ENCODE measurements at regions of chr13 and their contacts with region 1.

Region 1: GRCh38 chr13:79349011-79349410 is 57.0 kb downstream of the RBM26 start:
- DNase-seq: no peak
- H3K4me3 Mint-ChIP-seq: no peak overlapping the region
- H3K27ac Mint-ChIP-seq: no peak overlapping the region
- H3K4me1 Mint-ChIP-seq: peaks cover 47% of the 10 kb centered on the region
- H3K27me3 Mint-ChIP-seq: no peaks in the 10 kb centered on the region

Region 2: DNA sequence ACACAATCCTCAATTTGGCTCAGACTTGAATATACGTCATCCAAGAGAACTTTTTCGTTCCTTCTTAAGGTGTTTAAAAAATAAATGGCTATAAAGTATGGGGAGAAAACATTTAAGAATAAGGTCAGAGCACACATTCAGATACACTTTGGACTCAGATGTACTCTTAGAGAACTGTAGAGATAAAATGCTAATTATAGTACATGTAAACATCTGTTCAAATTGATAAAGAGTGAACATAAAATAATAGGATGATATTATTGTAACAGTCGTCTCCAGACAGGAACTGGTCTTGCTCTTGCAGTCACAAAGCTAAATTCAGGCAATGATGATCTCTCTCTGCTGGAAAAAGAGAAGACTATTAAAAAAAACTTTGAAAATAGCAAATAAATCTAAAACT is 34.4 kb before region 1 on chr13:
- intact Hi-C with region 1: loop called (anchors 5 kb)
- DNase-seq: no peak
- H3K4me3 Mint-ChIP-seq: no peak overlapping the region
- H3K27ac Mint-ChIP-seq: no peak overlapping the region
- H3K4me1 Mint-ChIP-seq: peaks cover 1% of the 10 kb centered on the region
- H3K27me3 Mint-ChIP-seq: no peaks in the 10 kb centered on the region

Region 3: GRCh38 chr13:79328510-79328909 is 20.5 kb before region 1 on chr13:
- intact Hi-C with region 1: no loop called
- DNase-seq: no peak
- H3K4me3 Mint-ChIP-seq: no peak overlapping the region
- H3K27ac Mint-ChIP-seq: no peak overlapping the region
- H3K4me1 Mint-ChIP-seq: peaks cover 6% of the 10 kb centered on the region
- H3K27me3 Mint-ChIP-seq: no peaks in the 10 kb centered on the region

Region 4: GRCh38 chr13:79360095-79360494 is 11.1 kb after region 1 on chr13:
- intact Hi-C with region 1: loop called (anchors 2 kb)
- DNase-seq: no peak
- H3K4me3 Mint-ChIP-seq: no peak overlapping the region
- H3K27ac Mint-ChIP-seq: no peak overlapping the region
- H3K4me1 Mint-ChIP-seq: peaks cover 20% of the 10 kb centered on the region
- H3K27me3 Mint-ChIP-seq: no peaks in the 10 kb centered on the region

Region 5: GRCh38 chr13:79385694-79386093 is 36.7 kb after region 1 on chr13:
- intact Hi-C with region 1: loop called (anchors 5 kb)
- DNase-seq: no peak
- H3K4me3 Mint-ChIP-seq: no peak overlapping the region
- H3K27ac Mint-ChIP-seq: no peak overlapping the region
- H3K4me1 Mint-ChIP-seq: peaks cover 65% of the 10 kb centered on the region
- H3K27me3 Mint-ChIP-seq: no peaks in the 10 kb centered on the region

Region 6: GRCh38 chr13:79501538-79502232 is 152.7 kb after region 1 on chr13:
- intact Hi-C with region 1: no loop called
- DNase-seq: no peak
- H3K4me3 Mint-ChIP-seq: peak overlapping the region; percentile 43
- H3K27ac Mint-ChIP-seq: peak overlapping the region; percentile 80
- H3K4me1 Mint-ChIP-seq: peaks cover 87% of the 10 kb centered on the region
- H3K27me3 Mint-ChIP-seq: no peaks in the 10 kb centered on the region